Ascending aorta (tissue), 2 donors: ENCODE measurements at regions of chr2 and their contacts with region 1.

Region 1: GRCh38 chr2:63841254-63842022 is at the start of gene UGP2:
- DNase-seq: peak; percentile 86 to 97
- H3K4me3 ChIP-seq: peak within 1 kb of the TSS; percentile 67 to 91
- H3K27ac ChIP-seq: peak within 1 kb of the TSS; percentile 97 to 98
- H3K4me1 ChIP-seq: peaks cover 0 to 31% of the 10 kb centered on the region in 2 donors
- H3K27me3 ChIP-seq: no peaks in the 10 kb centered on the region
- CTCF ChIP-seq: peak in 1 of 3 experiments; percentile 22
- total RNA-seq, gene UGP2: 25.7 TPM

Region 2: DNA sequence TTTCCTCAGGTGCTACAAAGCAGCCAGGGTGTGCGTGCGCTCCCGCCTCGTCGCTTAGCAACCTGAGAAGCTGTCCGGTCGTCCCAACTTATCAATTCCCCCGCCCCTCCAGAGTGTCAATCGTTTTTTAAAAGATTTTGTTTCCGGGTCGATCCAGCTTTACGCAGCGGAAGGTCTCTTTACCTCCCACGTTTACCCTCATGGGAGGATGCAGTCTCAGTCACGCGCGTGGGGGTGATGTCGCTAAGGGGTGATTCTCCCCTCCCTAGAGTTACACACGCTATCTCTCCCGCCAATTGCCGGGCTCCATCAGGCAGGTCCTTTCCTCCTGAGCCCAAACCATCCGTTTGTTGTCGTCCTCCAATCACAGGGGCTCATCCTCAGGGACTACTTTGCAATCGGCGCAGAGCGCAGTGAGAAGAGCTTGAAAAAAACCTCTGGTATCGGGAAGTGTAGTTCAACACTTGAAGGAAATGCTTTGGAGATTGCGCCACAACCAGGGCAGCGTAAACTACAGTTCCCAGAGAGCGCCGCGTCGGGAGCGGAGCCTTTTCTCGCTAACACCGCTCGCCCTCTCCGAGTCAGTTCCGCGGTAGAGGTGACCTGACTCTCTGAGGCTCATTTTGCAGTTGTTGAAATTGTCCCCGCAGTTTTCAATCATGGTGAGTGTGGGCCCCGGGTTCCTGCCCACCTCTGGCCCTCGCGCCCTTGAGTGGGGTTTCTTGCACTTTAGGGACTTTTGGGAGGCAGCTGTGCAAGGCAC is 252.9 kb before region 1 on chr2 and contains the starts of genes MDH1 and WDPCP:
- intact Hi-C with region 1: loop called (anchors 5 kb)
- DNase-seq: peak; percentile 90 to 97
- H3K4me3 ChIP-seq: peak within 1 kb of the TSS; percentile 66 to 83
- H3K27ac ChIP-seq: peak within 1 kb of the TSS; percentile 88
- H3K4me1 ChIP-seq: peaks cover 5 to 16% of the 10 kb centered on the region in 2 donors
- H3K27me3 ChIP-seq: no peaks in the 10 kb centered on the region
- CTCF ChIP-seq: no peak
- total RNA-seq, gene MDH1: 65.7 TPM
- total RNA-seq, gene WDPCP: 5.2 TPM

Region 3: GRCh38 chr2:63698825-63699548 is 142.5 kb before region 1 on chr2:
- intact Hi-C with region 1: loop called (anchors 5 kb)
- DNase-seq: peak; percentile 26 to 88
- H3K4me3 ChIP-seq: no peak overlapping the region
- H3K27ac ChIP-seq: peak overlapping the region; percentile 54 to 68
- H3K4me1 ChIP-seq: peaks cover 0 to 2% of the 10 kb centered on the region in 2 donors
- H3K27me3 ChIP-seq: no peaks in the 10 kb centered on the region
- CTCF ChIP-seq: peak; percentile 40 to 61 (median 45)

Region 4: DNA sequence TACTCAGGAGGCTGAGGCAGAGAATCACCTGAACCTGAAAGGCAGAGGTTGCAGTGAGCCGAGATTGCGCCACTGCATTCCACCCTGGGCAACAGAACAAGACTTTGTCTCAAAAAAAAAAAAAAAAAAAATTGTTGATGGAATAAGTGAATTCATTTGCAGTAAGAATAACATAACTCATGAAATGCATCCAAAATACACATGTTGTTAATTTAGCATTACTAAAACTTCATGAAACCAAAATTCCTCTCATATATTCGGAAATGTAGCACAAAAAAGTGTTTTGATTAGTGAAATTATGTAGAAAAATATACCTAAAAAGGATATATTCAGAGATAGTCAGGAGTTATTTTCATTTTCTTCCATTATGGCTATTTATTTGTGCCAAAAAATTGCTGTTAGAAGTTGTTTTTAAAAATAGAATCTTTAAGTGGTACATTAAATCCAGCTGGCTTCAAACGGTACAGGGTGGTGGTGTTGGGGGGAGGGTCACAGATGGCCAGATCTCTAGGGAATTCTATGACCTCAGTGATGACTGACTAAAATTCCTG is 78.0 kb before region 1 on chr2:
- intact Hi-C with region 1: loop called (anchors 1 kb)
- DNase-seq: peak in 1 of 2 donors; percentile 78
- H3K4me3 ChIP-seq: peak overlapping the region in 1 of 2 donors; percentile 2
- H3K27ac ChIP-seq: peak overlapping the region; percentile 45 to 63
- H3K4me1 ChIP-seq: peaks cover 4 to 14% of the 10 kb centered on the region in 2 donors
- H3K27me3 ChIP-seq: no peaks in the 10 kb centered on the region
- CTCF ChIP-seq: no peak

Region 5: GRCh38 chr2:63790913-63791312 is 50.5 kb before region 1 on chr2:
- intact Hi-C with region 1: loop called (anchors 2 kb)
- DNase-seq: peak in 1 of 2 donors; percentile 76
- H3K4me3 ChIP-seq: no peak overlapping the region
- H3K27ac ChIP-seq: peak overlapping the region in 1 of 2 donors; percentile 36
- H3K4me1 ChIP-seq: peaks cover 3 to 22% of the 10 kb centered on the region in 2 donors
- H3K27me3 ChIP-seq: no peaks in the 10 kb centered on the region
- CTCF ChIP-seq: no peak

Region 6: GRCh38 chr2:63827749-63828148 is 13.7 kb before region 1 on chr2:
- intact Hi-C with region 1: loop called (anchors 1 kb)
- DNase-seq: no peak
- H3K4me3 ChIP-seq: no peak overlapping the region
- H3K27ac ChIP-seq: peak overlapping the region; percentile 36 to 70
- H3K4me1 ChIP-seq: peaks cover 0 to 24% of the 10 kb centered on the region in 2 donors
- H3K27me3 ChIP-seq: no peaks in the 10 kb centered on the region
- CTCF ChIP-seq: no peak

Region 7: GRCh38 chr2:63875131-63875527 is 33.7 kb after region 1 on chr2:
- intact Hi-C with region 1: loop called (anchors 5 kb)
- DNase-seq: no peak
- H3K4me3 ChIP-seq: no peak overlapping the region
- H3K27ac ChIP-seq: peak overlapping the region; percentile 72 to 75
- H3K4me1 ChIP-seq: peaks cover 3 to 29% of the 10 kb centered on the region in 2 donors
- H3K27me3 ChIP-seq: no peaks in the 10 kb centered on the region
- CTCF ChIP-seq: no peak

Region 8: DNA sequence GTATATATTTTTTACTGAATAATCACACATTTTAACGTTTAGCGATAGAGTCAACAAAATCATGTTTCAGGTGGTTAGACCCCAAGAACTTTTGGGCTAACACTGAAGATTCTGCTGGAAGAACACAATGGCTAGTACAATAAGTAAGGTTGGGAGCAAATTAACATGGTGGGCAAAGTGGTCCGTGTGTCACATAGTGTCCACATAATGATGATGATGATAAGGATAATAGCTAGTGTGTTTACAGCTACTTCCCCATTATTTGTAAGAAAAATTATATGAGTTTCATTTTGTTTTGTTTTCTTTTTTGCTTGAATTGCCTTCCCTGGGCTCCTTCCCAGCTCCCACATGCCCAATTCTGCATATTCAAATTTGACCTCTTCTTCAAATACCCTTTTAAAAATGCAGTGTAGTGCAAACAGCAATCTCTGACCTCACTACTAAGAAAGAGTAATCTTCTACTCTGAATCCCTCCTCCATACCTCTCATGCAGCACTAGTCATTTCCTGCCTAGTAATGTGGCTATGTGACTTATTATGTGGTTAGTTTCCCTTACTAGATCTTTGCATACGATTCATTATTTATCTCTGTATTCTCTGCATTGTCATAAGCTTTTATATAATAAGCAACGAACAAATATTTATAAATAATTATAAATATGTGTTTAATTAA is 194.7 kb after region 1 on chr2:
- intact Hi-C with region 1: no loop called
- DNase-seq: no peak
- H3K4me3 ChIP-seq: no peak overlapping the region
- H3K27ac ChIP-seq: no peak overlapping the region
- H3K4me1 ChIP-seq: no peaks in the 10 kb centered on the region
- H3K27me3 ChIP-seq: no peaks in the 10 kb centered on the region
- CTCF ChIP-seq: no peak